Naive thymus-derived CD4-positive, alpha-beta T cell (primary cell): ENCODE measurements at regions of chr12 and their contacts with region 1.

Region 1: GRCh38 chr12:122793685-122794106 is 19.3 kb downstream of the CCDC62 start:
- DNase-seq: peak in 7 of 9 donors; percentile 35 to 72 (median 62)
- ATAC-seq: peak; percentile 82
- H3K4me3 ChIP-seq: no peak overlapping the region
- H3K4me3 Mint-ChIP-seq: no peak overlapping the region
- H3K27ac ChIP-seq: no peak overlapping the region
- H3K27ac Mint-ChIP-seq: no peak overlapping the region
- H3K4me1 ChIP-seq: no peaks in the 10 kb centered on the region
- H3K4me1 Mint-ChIP-seq: peaks cover 0 to 3% (median 0%) of the 10 kb centered on the region in 7 donors
- H3K27me3 ChIP-seq: no peaks in the 10 kb centered on the region
- H3K27me3 Mint-ChIP-seq: no peaks in the 10 kb centered on the region

Region 2: DNA sequence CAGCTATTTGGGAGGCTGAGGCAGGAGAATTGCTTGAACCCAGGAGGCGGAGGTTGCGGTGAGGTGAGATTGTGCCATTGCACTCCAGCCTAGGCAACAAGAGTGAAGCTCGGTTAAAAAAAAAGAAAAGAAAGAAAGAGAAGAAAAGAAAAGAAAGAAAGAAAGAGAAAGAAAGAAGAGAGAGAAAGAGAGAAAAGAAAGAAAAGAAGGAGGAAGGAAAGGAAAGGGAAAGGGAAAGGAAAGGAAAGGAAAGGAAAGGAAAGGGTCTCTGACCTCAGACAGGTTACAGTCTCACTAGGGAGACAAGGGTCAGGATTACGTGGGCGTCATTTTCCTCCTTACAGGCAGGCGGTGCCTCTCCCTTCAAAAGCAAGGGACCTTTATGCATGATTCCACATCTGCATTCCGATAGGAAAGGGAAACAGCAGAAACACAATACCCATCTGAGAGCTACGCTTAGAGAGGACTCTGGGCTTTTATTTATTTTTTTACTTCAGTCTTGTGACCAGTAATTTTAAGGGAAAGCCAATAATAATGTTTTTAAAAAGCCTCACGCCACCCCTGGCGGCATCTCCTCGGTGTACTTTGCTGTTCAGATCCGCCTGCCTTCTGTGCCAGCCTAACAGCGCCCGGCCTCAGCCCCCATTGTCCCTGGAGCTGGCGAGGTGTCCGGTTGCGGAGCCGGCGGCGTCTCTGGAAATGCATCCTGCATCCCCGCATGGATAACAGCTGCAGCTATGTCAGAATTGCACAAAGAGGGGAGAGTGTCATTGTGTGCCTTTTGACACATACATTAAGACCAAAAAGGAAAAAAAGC is 40.6 kb after region 1 on chr12:
- CTCF ChIA-PET with region 1: interaction called, 8 read pairs
- POLR2A ChIA-PET with region 1: interaction called, 6 read pairs
- intact Hi-C with region 1: loop called (anchors 1 to 5 kb)
- DNase-seq: peak in 2 of 9 donors; percentile 27 to 33
- ATAC-seq: peak; percentile 30
- H3K4me3 ChIP-seq: peak overlapping the region; percentile 55
- H3K4me3 Mint-ChIP-seq: peak overlapping the region; percentile 85 to 99 (median 92)
- H3K27ac ChIP-seq: peak overlapping the region; percentile 50
- H3K27ac Mint-ChIP-seq: peak overlapping the region; percentile 87 to 98 (median 95)
- H3K4me1 ChIP-seq: peaks cover 0 to 13% of the 10 kb centered on the region in 2 donors
- H3K4me1 Mint-ChIP-seq: peaks cover 30 to 48% (median 44%) of the 10 kb centered on the region in 7 donors
- H3K27me3 ChIP-seq: no peaks in the 10 kb centered on the region
- H3K27me3 Mint-ChIP-seq: peaks cover 0 to 29% (median 0%) of the 10 kb centered on the region in 5 donors